Mammary epithelial cell (primary cell): ENCODE measurements at regions of chrX and their contacts with region 1.

Region 1: GRCh38 chrX:107627838-107628661 is at the start of gene PRPS1:
- DNase-seq: peak; percentile 90
- H3K4me3 ChIP-seq: peak within 1 kb of the TSS; percentile 48 to 66 (median 66)
- H3K27ac ChIP-seq: peak within 1 kb of the TSS; percentile 56
- H3K4me1 ChIP-seq: no peaks in the 10 kb centered on the region
- H3K27me3 ChIP-seq: peaks cover 2% of the 10 kb centered on the region
- CTCF ChIP-seq: no peak
- total RNA-seq, gene PRPS1: 23.2 to 34.1 TPM

Region 2: GRCh38 chrX:107571296-107571998 is 56.6 kb before region 1 on chrX:
- CTCF ChIA-PET with region 1: no interaction called
- dilution Hi-C with region 1: no loop called
- in situ Hi-C with region 1: no loop called
- intact Hi-C with region 1: loop called (anchors 5 kb)
- DNase-seq: peak; percentile 92
- H3K4me3 ChIP-seq: no peak overlapping the region
- H3K27ac ChIP-seq: peak overlapping the region; percentile 48
- H3K4me1 ChIP-seq: peaks cover 28% of the 10 kb centered on the region
- H3K27me3 ChIP-seq: no peaks in the 10 kb centered on the region
- CTCF ChIP-seq: no peak